ENCODE measurements at regions of chr2 and their contacts with region 1.

Region 1: DNA sequence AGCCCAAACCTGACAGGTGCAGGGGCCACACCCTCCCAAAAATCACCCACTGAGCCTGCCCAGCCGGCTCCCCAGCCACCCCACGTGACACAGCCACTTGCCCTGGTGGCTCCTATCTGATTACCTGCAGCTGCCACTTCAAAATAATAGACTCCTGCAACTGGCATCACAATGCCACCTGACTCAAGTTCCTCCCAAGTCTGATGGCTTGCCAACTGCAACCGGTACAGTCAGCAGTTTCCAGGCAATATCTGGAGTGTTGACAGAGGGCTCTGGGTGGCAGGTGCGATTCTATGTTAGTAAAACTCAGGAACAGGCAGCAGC is 66.1 kb downstream of the CRACDL start:
- DNase-seq: no peak
- H3K4me3 ChIP-seq: no peak overlapping the region
- H3K27ac ChIP-seq: peak overlapping the region in 26 of 59 donors; percentile 6 to 86 (median 54)
- H3K27me3 ChIP-seq: no peaks in the 10 kb centered on the region
- CTCF ChIP-seq: no peak

Region 2: DNA sequence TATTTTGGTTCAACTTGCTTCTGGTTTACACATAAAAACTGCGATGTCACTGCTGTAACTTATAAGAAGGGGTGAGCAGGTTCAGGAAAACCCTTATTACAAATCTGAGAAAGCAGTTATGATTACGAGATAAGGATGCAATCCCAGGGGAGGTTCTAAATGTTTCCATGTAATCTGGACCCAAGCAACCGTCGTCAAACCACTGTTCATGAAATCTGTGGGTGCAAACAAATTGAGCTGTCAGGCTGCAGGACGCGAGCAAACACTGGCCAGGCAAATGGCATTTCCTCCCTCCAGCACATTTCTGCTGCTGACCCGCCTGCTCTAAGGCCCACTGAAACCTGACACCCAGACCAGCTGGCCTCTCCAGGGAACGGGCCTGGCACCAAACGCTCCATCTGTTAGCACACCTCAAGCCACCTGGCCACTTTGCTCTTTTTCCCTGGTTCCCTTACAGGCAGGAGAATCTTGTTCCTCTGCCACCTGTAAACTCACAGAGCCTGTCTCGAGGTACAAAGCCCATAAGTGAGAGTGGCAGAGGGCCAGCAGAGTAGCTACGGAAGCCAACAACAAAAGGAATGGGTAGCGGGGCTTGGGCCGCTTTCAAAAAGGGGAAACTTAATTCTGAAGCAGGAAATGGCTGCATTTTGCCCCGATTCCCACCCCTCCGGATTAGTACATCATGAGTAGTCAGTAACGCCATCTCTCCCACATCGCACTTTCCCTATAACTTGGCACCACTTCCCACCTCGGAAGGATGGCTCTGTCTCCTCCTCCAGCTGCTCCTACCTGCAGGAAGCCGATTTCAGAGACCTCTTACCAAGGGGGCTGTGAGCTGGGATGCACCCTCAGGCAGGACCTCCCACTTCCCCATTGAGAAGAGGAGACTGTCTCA is 39.7 kb after region 1 on chr2:
- intact Hi-C with region 1: loop called in 1 of 2 experiments (anchors 5 kb)
- DNase-seq: peak in 1 of 10 donors; percentile 91
- H3K4me3 ChIP-seq: peak overlapping the region in 2 of 59 donors; percentile 12 to 16
- H3K27ac ChIP-seq: peak overlapping the region in 54 of 59 donors; percentile 28 to 91 (median 76)
- H3K27me3 ChIP-seq: no peaks in the 10 kb centered on the region
- CTCF ChIP-seq: no peak

Measured in dorsolateral prefrontal cortex (tissue), 120 donors.